ENCODE measurements at regions of chr2 and their contacts with region 1.

Region 1: GRCh38 chr2:241049739-241050623 is 51.6 kb downstream of the SNED1 start:
- DNase-seq: no peak
- H3K4me3 ChIP-seq: no peak overlapping the region
- H3K27ac ChIP-seq: no peak overlapping the region
- H3K4me1 ChIP-seq: peaks cover 4% of the 10 kb centered on the region
- CTCF ChIP-seq: no peak

Region 2: DNA sequence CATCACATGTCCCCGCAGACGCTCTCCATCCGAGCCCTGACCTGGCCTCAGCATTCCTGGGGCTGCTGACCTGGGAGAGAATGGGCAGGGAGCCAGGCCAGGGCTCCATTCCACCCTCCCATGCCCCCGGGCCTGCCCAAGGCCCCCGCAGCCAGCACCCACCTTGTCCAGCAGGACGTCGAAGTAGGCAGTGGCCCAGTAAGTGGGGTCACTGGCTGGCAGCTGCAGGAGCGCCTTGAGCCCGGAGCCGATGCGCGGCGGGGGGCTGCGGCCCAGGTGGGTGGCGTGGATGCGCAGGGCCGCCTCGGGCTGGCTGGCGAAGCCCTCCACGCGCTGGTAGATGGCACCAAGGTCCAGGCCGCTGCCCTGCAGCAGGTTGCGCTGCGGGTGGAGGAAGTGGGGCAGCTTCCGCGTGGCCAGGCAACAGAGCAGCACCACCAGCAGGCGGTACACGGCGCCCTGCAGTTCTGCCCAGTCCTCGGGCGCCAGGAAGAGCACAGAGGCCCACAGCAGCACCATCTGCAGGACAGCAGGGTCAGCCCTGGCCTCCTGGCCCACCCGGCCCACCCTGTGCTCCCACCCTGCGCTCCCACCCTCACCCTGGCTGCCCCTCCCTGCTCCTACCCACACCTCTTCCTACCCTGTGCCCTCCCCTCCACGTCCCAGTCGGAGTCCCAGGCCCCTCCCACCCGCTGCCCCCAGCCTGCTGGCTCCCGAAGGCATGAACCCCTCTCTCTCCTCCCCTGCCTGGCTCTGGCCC is 161.7 kb before region 1 on chr2:
- CTCF ChIA-PET with region 1: interaction called, 22 read pairs
- POLR2A ChIA-PET with region 1: no interaction called
- intact Hi-C with region 1: no loop called
- DNase-seq: no peak
- H3K4me3 ChIP-seq: no peak overlapping the region
- H3K27ac ChIP-seq: no peak overlapping the region
- H3K4me1 ChIP-seq: no peaks in the 10 kb centered on the region
- CTCF ChIP-seq: no peak